ENCODE measurements at regions of chr20 and their contacts with region 1.

Region 1: GRCh38 chr20:63223221-63224207 is 7.6 kb upstream of the YTHDF1 start:
- DNase-seq: peak; percentile 48 to 62
- ATAC-seq: peak; percentile 46 to 66; a peak in 5 of 6 replicates
- H3K4me3 ChIP-seq: no peak overlapping the region
- H3K27ac ChIP-seq: peak overlapping the region; percentile 89 to 99
- H3K4me1 ChIP-seq: peaks cover 46% of the 10 kb centered on the region
- CTCF ChIP-seq: peak; percentile 95
- EP300 ChIP-seq: no peak
- POLR2A ChIP-seq: no peak
- RAD21 ChIP-seq: peak; percentile 95 to 97

Region 2: DNA sequence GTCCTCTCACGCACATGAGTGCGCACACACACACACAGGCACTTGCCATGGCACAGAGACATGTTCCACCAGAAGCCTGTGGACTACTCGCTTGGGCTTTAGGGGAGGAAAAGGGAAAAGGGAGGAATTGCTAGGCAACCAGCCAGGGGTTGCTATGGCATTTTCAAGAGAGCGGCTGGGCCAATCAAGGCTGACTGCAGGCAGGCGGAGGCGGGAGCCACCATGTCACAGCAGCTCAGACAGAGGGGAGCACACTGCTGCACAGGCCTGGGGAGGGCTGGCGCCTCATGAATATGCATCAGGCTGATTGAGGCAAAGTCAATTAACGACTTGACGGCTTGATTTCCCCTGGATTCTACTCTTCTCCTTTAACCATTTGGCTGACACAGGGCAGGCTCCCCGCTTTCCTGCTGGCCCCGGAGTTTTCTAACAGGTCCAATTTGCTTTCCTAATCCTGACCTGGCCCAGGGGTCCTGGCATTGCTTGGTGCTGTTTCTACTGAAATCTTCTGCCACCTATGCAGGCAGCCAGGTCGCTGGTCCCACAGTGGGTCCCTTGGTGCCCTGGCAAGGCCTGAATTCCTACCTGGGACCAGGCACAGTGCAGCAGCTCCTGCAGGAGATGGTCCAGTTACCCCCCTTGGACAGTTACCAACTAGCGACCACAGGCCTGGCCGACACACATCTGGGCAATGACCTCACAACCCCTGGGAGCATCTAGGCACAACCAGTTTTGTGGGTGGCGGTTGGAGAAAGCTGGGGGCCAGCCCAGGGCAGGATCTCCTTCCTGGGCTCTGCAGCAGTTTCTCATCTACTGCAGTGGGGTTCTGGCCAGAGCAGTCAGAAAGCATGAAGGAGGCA is 59.7 kb before region 1 on chr20:
- CTCF ChIA-PET with region 1: interaction called, 11 read pairs
- POLR2A ChIA-PET with region 1: no interaction called
- DNase-seq: no peak
- ATAC-seq: no peak
- H3K4me3 ChIP-seq: no peak overlapping the region
- H3K27ac ChIP-seq: no peak overlapping the region
- H3K4me1 ChIP-seq: no peaks in the 10 kb centered on the region
- CTCF ChIP-seq: no peak
- EP300 ChIP-seq: no peak
- POLR2A ChIP-seq: no peak
- RAD21 ChIP-seq: no peak

Region 3: DNA sequence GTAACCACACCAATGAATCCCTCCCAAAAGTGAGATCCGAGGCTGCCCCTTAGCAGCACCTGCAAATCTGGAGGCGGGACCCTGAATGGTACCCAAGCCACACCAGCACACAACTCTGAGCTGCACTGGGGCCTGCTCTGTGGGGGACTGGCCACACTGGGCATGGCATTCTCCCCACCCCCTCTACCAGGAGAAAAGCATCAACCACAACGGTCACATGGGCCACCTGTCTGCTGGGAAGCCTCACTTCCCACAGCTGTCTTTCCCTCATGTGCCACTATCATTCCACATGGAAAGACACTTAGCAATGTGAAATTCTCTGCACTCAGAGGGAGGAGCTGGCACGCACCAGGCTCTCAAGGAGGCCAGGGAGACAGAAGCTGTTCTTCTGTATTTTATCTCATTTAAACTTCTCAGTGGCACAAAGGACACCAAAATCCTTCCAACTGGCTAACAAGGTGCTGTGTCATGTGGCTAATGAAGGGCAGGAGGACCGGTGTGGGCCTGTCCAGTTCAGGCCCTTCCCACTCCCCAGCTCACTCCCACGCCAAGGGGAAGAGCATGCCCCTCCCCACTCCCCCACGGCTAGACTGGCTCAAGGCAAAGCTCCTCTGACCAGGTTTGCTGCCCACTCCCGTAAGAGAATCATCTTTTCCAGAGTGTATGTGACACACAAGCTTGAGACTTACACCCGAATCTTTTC is 26.6 kb before region 1 on chr20:
- CTCF ChIA-PET with region 1: interaction called, 29 read pairs
- POLR2A ChIA-PET with region 1: no interaction called
- DNase-seq: no peak
- ATAC-seq: peak; percentile 14 to 48; a peak in 3 of 6 replicates
- H3K4me3 ChIP-seq: no peak overlapping the region
- H3K27ac ChIP-seq: no peak overlapping the region
- H3K4me1 ChIP-seq: peaks cover 33% of the 10 kb centered on the region
- CTCF ChIP-seq: no peak
- EP300 ChIP-seq: no peak
- POLR2A ChIP-seq: no peak
- RAD21 ChIP-seq: no peak

Region 4: DNA sequence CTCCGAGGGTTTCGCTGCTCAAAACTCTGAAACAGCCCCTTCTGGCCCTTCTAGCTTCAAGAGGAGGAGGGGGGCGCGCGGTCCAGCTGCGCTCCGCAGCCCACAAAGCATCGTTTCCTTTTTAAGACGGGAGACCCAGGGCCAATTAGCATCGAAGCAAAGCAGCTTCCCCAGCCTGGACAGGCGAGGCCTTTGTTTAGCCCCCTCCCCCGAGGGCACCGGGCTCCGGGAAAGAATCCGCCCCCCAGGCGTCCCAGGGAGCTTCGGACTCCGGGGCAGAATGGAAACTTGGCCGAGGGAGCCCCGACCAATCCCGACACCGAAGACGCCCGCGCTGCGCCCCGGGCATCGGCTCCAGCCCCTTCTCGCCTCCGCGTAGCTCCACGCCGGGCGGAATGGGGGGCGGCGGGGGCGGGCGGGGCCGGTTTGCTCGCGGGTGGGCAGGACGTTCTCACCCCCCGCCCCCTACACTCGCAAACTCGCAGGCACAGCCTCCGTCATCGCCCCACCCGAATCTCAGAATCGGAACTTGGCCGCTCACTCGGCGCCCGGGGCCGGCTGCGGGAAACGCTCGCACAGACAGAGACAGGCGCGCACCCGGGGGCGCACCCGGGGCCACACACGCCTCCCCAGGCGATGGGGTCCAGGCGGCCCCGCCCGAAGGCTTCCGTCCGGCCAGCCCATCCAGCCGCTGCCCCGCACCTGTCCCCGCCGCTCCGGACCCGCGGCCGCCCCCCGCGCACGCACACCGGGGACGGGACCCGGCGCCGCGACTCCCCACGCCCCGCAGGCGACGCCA is 30.1 kb after region 1 on chr20:
- CTCF ChIA-PET with region 1: interaction called, 154 read pairs
- POLR2A ChIA-PET with region 1: interaction called, 5 read pairs
- DNase-seq: peak in 1 of 2 experiments; percentile 45
- ATAC-seq: peak; percentile 7 to 41; a peak in 3 of 6 replicates
- H3K4me3 ChIP-seq: peak overlapping the region; percentile 50
- H3K27ac ChIP-seq: peak overlapping the region; percentile 67 to 94
- H3K4me1 ChIP-seq: peaks cover 54% of the 10 kb centered on the region
- CTCF ChIP-seq: no peak
- EP300 ChIP-seq: no peak
- POLR2A ChIP-seq: no peak
- RAD21 ChIP-seq: no peak

Region 5: DNA sequence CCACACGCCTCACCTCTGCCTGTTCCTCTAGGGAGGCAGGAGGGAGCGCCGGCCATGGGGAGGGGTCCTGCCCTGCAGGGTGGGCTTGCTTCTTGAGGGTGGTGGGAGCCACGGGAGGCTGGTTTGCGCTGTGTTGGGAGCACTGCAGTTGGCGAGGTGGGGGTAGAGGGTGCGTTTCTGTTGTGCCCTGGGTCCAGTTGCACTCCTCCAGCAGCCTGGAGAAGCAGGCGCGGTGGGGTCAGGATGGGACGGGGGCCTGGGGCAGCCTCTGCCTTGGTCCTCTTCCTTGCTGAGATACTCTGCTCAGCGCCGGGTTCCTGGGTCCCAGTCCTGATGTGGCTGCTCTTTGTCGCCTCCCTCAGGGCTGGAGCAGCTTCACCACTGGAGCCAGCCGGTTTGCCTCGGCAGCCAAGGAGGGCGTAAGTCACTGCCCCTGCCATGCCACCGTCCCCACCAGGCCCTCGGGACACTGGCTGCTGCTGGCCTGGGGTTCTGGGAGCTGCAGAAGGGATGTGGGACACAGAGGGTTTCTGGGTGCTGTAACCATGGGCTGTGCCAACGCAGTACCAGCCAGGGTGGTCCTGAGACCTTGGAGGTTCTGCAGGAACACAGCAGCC is 57.5 kb after region 1 on chr20:
- CTCF ChIA-PET with region 1: interaction called, 401 read pairs
- POLR2A ChIA-PET with region 1: interaction called, 7 read pairs
- DNase-seq: peak; percentile 48 to 49
- ATAC-seq: peak; percentile 46 to 83; a peak in 4 of 6 replicates
- H3K4me3 ChIP-seq: no peak overlapping the region
- H3K27ac ChIP-seq: no peak overlapping the region
- H3K4me1 ChIP-seq: no peaks in the 10 kb centered on the region
- CTCF ChIP-seq: peak; percentile 36
- EP300 ChIP-seq: no peak
- POLR2A ChIP-seq: no peak
- RAD21 ChIP-seq: peak; percentile 30 to 51; a peak in 1 of 5 replicates

Region 6: DNA sequence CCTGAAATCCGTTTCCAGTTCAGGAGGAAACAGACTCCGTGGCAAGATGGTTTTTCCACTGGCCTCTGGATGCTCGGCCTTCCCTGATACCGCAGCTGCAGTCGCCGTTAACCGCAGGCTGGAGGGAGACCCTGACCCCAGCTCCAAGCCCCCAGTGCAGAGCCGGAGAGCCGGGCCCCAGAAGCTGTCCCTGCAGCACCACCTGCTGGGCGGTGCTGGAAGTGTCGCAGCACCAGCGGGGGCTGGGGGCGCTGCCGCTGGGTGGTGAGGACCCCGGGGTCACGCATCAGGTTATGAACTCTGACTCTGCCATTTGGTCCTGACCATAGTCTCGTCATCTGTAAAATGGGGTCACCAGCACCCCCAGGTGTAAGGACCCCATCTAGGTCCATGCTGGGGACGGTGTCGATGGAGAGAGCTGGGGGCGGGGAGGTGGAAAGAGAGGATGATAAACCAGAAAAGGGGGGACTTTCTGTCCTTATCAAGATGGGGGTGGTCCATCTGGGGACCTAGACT is 158.4 kb after region 1 on chr20:
- CTCF ChIA-PET with region 1: interaction called, 67 read pairs
- POLR2A ChIA-PET with region 1: no interaction called
- DNase-seq: peak in 1 of 2 experiments; percentile 59
- ATAC-seq: peak in 1 of 2 experiments; percentile 70; a peak in 3 of 6 replicates
- H3K4me3 ChIP-seq: no peak overlapping the region
- H3K27ac ChIP-seq: no peak overlapping the region
- H3K4me1 ChIP-seq: no peaks in the 10 kb centered on the region
- CTCF ChIP-seq: peak; percentile 88
- EP300 ChIP-seq: no peak
- POLR2A ChIP-seq: no peak
- RAD21 ChIP-seq: peak; percentile 91 to 92

Region 7: DNA sequence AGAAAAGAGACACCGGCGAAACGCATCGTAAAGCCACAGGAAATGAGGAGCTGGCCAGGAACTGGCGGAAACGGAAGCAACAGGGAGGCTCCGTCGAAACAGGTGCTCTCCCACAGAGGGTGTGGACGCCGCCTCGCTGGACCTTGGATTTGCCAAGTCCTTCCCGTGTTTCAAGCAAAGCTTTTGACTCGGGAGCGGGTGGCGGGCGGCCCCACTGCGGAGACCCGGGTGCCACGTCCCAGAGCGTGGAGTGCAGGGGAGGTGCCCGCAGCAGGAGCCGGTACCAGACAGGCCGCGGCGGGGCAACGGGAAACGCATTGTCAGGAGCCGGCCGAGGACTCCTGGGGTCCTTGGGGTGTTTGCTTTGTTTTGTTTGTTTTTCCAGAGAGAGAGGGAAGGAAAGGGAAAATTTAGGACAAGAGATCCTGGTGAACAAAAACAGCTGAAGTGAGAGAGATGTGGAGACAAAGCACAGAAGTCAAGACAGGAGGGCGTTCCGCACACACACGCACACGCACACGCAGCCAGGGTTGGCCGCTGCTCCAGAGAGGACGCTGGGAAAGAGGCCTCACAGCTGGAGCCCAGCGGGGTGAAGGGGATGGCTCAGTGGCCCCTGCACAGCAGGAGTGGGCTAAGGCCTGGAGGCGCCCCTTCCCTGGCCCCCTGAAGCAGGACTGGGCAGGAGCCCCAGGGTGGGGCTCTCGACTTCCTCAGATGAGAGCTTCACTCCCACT is 188.6 kb after region 1 on chr20:
- CTCF ChIA-PET with region 1: no interaction called
- POLR2A ChIA-PET with region 1: no interaction called
- DNase-seq: no peak
- ATAC-seq: no peak
- H3K4me3 ChIP-seq: no peak overlapping the region
- H3K27ac ChIP-seq: no peak overlapping the region
- H3K4me1 ChIP-seq: no peaks in the 10 kb centered on the region
- CTCF ChIP-seq: no peak
- EP300 ChIP-seq: no peak
- POLR2A ChIP-seq: no peak
- RAD21 ChIP-seq: no peak

Region 8: DNA sequence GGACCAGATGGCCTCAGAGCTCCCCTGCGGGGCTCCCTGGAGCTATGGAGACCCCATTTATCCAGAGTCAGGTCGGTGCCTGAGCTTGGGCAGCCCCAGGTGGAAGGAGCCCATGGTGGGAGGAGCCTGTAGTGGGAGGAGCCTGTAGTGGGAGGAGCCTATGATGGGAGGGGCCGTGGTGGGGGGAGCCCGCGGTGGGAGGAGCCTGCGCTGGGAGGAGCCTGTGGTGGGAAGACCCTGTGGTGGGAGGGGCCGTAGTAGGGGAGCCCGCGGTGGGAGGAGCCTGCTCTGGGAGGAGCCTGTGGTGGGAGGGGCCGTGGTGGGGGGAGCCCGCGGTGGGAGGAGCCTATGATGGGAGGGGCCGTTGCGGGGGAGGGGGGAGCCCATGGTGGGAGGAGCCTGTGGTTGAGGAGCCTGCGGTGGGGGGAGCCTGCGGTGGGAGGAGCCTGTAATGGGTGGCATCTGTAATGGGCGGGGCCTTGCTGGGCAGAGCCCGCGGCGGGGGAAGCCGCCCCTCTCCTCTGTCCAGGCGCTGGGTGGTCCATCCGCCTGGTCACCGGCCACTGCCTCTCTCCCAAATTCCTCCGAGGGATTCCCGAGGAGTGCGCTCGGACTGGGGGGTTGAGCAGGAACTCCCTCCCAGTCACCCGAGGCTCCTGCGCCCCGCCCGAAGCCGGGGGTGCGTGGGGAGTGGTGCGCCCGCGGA is 329.9 kb after region 1 on chr20:
- CTCF ChIA-PET with region 1: no interaction called
- POLR2A ChIA-PET with region 1: no interaction called
- DNase-seq: peak; percentile 50 to 90
- ATAC-seq: peak; percentile 21 to 75; a peak in 5 of 6 replicates
- H3K4me3 ChIP-seq: peak overlapping the region; percentile 71
- H3K27ac ChIP-seq: peak overlapping the region; percentile 73 to 83
- H3K4me1 ChIP-seq: peaks cover 4% of the 10 kb centered on the region; the same call in 1 of the 3 replicates
- CTCF ChIP-seq: no peak
- EP300 ChIP-seq: no peak
- POLR2A ChIP-seq: no peak
- RAD21 ChIP-seq: no peak